Activated CD8-positive, alpha-beta memory T cell treated with anti-CD3 and anti-CD28 coated beads, Interleukin-2, amount 10 ng/mL, durations not matched to agents 7 days and 5 days (primary cell): ENCODE measurements at regions of chr5 and their contacts with region 1.

Region 1: GRCh38 chr5:111278845-111279504 is 54.8 kb downstream of the CAMK4 start:
- DNase-seq: peak; percentile 88
- ATAC-seq: peak; percentile 99
- H3K4me3 Mint-ChIP-seq: no peak overlapping the region
- H3K27ac Mint-ChIP-seq: peak overlapping the region; percentile 52
- H3K4me1 Mint-ChIP-seq: peaks cover 20% of the 10 kb centered on the region
- H3K27me3 Mint-ChIP-seq: no peaks in the 10 kb centered on the region

Region 2: GRCh38 chr5:110460837-110461236 is 818.1 kb before region 1 on chr5:
- CTCF ChIA-PET with region 1: no interaction called
- DNase-seq: no peak
- ATAC-seq: no peak
- H3K4me3 Mint-ChIP-seq: no peak overlapping the region
- H3K27ac Mint-ChIP-seq: no peak overlapping the region
- H3K4me1 Mint-ChIP-seq: no peaks in the 10 kb centered on the region
- H3K27me3 Mint-ChIP-seq: no peaks in the 10 kb centered on the region

Region 3: GRCh38 chr5:111158105-111158744 is 120.8 kb before region 1 on chr5:
- CTCF ChIA-PET with region 1: interaction called, 56 read pairs
- DNase-seq: peak; percentile 85
- ATAC-seq: peak; percentile 75
- H3K4me3 Mint-ChIP-seq: no peak overlapping the region
- H3K27ac Mint-ChIP-seq: no peak overlapping the region
- H3K4me1 Mint-ChIP-seq: peaks cover 4% of the 10 kb centered on the region
- H3K27me3 Mint-ChIP-seq: peaks cover 3% of the 10 kb centered on the region

Region 4: DNA sequence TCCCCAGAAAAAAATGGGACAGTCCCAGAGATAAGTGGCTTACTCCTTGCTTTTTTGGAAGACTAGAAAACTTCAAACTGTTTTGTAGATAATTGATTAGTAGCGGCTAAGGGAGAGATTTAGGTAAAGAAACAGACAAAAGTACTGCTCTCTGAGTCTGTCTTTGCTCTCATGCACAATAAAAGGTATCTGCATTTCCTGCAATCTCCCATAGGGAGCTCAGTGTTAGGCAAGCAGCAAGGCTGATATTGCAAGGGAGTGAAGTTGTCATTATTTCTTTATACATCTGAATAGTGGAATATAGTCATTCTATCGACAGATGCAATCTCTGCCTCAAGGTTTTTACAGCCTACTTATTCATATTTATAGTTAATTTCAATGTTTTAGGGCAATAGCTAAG is 109.7 kb before region 1 on chr5:
- CTCF ChIA-PET with region 1: interaction called, 50 read pairs
- DNase-seq: no peak
- ATAC-seq: no peak
- H3K4me3 Mint-ChIP-seq: no peak overlapping the region
- H3K27ac Mint-ChIP-seq: no peak overlapping the region
- H3K4me1 Mint-ChIP-seq: no peaks in the 10 kb centered on the region
- H3K27me3 Mint-ChIP-seq: no peaks in the 10 kb centered on the region

Region 5: DNA sequence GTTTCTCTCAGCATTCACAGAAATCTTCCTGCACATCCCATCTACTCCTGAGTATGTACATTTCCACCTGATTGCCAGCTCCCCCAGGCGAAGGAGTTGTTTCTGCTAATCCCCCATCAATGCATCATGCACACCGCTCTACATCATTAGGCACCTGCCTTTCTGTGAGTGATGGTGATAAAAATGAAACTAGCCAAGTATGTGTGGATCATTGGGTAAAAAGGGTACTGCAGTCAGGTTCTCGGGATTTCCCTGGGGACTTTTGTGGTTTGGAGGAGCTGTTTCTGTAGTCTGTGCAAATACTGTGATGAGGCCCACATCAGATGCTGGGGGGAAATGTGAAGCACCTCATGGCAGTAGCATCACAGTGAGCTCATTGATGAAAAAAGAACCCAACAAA is 24.4 kb before region 1 on chr5:
- CTCF ChIA-PET with region 1: interaction called, 12 read pairs
- DNase-seq: peak; percentile 78
- ATAC-seq: peak; percentile 82
- H3K4me3 Mint-ChIP-seq: peak overlapping the region; percentile 44
- H3K27ac Mint-ChIP-seq: peak overlapping the region; percentile 85
- H3K4me1 Mint-ChIP-seq: peaks cover 68% of the 10 kb centered on the region
- H3K27me3 Mint-ChIP-seq: no peaks in the 10 kb centered on the region